Activated B cell treated with CpG ODN at 0.5 μM for 24 hours (primary cell): ENCODE measurements at regions of chr7 and their contacts with region 1.

Region 1: GRCh38 chr7:45923290-45923689 is 2.2 kb upstream of the IGFBP3 start:
- DNase-seq: no peak
- ATAC-seq: no peak
- H3K4me3 Mint-ChIP-seq: no peak overlapping the region
- H3K27ac Mint-ChIP-seq: no peak overlapping the region
- H3K4me1 Mint-ChIP-seq: peaks cover 20% of the 10 kb centered on the region
- H3K27me3 Mint-ChIP-seq: peaks cover 48% of the 10 kb centered on the region
- CTCF ChIP-seq: no peak

Region 2: DNA sequence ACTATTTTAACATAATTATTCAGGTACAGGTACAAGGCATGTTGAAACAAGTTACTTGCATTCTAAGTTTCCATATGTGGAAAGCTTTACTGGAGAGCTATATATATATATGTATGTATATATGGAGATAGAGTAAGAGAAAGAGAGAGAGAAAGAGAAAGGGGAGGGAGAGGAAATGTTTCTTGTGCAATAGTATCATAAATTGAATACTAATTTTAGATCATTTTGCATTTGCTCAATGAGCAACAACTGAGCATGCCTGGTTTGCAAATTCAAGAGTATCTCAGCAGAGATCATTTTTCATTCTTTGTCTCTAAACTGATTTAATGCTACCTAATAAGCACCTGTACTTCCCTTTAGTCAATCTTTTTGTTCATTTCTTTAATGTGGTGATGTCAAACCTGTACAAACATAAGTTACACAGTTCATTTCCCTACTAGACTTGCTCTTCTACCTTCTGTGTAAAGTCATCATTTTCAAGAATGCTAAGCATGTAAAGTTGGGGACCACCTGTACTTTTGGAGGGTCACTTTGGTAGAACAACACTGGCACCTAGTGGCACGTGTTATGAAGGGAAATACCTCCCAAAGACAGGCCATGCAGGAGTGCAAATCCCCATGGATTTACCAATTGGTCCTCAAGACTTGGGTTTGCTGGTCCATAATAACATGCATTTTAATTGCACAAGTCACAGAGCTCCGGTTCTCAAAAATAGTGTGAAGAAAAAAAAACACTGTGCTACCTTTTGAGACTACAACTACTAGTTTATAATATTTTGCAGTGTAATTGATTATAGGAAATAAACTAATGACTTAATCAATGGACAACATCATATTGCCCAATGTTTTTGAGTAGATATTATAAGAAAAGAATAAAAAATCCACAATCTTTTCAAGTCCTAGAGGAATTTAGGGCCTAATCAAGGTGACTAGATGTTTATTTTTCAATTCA is 429.0 kb after region 1 on chr7:
- CTCF ChIA-PET with region 1: no interaction called
- POLR2A ChIA-PET with region 1: no interaction called
- intact Hi-C with region 1: loop called (anchors 2 kb)
- DNase-seq: no peak
- ATAC-seq: no peak
- H3K4me3 Mint-ChIP-seq: no peak overlapping the region
- H3K27ac Mint-ChIP-seq: no peak overlapping the region
- H3K4me1 Mint-ChIP-seq: no peaks in the 10 kb centered on the region
- H3K27me3 Mint-ChIP-seq: no peaks in the 10 kb centered on the region
- CTCF ChIP-seq: no peak